Activated B cell treated with CpG ODN at 0.5 μM for 24 hours (primary cell): ENCODE measurements at regions of chr2 and their contacts with region 1.

Region 1: DNA sequence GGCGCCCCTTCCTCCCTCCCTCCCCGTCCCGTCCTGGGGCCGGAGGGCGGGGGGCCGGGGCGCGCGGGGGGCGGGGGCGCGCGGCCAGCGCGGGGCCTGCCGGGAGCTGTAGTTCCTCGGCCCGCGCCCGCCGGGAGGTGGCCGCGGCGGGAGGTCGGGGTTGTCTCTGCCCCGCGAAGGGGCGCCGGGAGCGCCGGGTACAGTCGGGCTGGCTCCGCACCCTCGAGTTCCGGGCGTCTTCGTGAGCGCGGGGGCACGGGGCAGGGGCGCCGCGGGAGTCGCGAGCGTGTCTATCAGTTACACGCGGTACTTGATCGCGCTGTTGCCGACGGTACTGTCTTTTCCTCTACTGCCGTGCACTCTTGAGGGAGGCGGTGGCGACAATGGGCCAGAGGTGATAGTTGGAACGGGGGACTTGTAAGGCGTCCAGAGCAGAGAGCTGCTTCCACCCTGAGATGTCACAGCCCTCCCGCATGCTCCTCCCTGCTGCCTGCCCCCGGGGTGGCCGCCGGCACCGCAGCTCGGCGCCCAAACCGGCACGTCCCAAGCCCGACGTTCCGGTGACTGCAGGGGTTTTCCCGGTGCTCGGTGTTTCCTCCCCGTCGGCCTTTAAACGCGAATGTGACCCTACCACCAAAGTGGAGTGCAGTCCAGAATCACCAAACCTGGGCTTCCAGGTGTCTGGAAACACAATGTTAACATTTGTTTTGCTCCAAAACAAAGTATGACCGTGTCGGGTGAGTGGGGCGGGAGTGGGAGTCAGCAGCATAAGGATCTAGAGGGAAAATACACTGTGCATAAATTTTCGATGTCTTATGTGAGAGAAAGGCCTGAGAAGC is at the start of gene PRKD3:
- DNase-seq: peak; percentile 73
- ATAC-seq: peak; percentile 83
- H3K4me3 Mint-ChIP-seq: peak within 1 kb of the TSS; percentile 97
- H3K27ac Mint-ChIP-seq: peak within 1 kb of the TSS; percentile 96
- H3K4me1 Mint-ChIP-seq: peaks cover 38% of the 10 kb centered on the region
- H3K27me3 Mint-ChIP-seq: no peaks in the 10 kb centered on the region
- CTCF ChIP-seq: no peak
- total RNA-seq, gene PRKD3: 73.0 and 82.5 TPM in 2 replicates

Region 2: GRCh38 chr2:37231241-37232130 is 93.5 kb before region 1 on chr2 and contains the starts of genes CEBPZ and NDUFAF7:
- CTCF ChIA-PET with region 1: no interaction called
- POLR2A ChIA-PET with region 1: interaction called, 12 read pairs
- intact Hi-C with region 1: loop called (anchors 1 kb)
- DNase-seq: peak; percentile 80
- ATAC-seq: peak; percentile 91
- H3K4me3 Mint-ChIP-seq: no peak within 1 kb of the TSS
- H3K27ac Mint-ChIP-seq: no peak within 1 kb of the TSS
- H3K4me1 Mint-ChIP-seq: peaks cover 16% of the 10 kb centered on the region
- H3K27me3 Mint-ChIP-seq: no peaks in the 10 kb centered on the region
- CTCF ChIP-seq: no peak
- total RNA-seq, gene CEBPZ: 55.2 and 57.0 TPM in 2 replicates
- total RNA-seq, gene NDUFAF7: 22.4 and 22.8 TPM in 2 replicates

Region 3: DNA sequence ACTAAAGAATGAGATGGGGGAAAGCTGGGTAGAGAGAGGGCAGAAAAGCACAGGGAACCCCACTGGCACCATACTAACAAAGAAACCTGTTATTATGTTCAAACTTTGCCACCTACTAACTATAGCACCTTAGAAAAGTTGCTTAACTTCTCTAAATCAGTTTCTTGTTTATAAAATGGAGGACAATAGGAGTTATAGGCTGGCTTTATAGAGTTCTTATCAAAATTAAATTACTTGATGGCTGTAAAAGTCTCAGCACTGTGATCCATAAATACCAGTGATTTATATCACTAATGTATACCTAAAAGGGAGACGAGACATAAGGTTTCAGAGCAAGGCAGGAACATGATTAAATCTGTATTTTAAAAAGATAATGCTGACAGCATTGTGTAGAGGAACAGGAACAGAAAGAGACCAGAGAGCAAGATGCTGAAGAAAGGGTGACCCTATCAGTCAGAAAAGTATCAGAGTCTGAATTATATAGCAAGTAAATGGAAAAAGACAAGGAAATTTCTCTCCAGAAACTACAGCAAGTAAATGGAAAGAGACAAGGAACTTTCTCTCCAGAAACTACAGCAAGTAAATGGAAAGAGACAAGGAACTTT is 29.4 kb before region 1 on chr2:
- CTCF ChIA-PET with region 1: no interaction called
- POLR2A ChIA-PET with region 1: interaction called, 8 read pairs
- intact Hi-C with region 1: loop called (anchors 2 kb)
- DNase-seq: no peak
- ATAC-seq: peak; percentile 34
- H3K4me3 Mint-ChIP-seq: no peak overlapping the region
- H3K27ac Mint-ChIP-seq: peak overlapping the region; percentile 39
- H3K4me1 Mint-ChIP-seq: peaks cover 48% of the 10 kb centered on the region
- H3K27me3 Mint-ChIP-seq: no peaks in the 10 kb centered on the region
- CTCF ChIP-seq: no peak

Region 4: GRCh38 chr2:37337642-37338310 is 12.8 kb after region 1 on chr2:
- CTCF ChIA-PET with region 1: interaction called, 4 read pairs
- POLR2A ChIA-PET with region 1: interaction called, 13 read pairs
- intact Hi-C with region 1: no loop called
- DNase-seq: no peak
- ATAC-seq: no peak
- H3K4me3 Mint-ChIP-seq: no peak overlapping the region
- H3K27ac Mint-ChIP-seq: no peak overlapping the region
- H3K4me1 Mint-ChIP-seq: peaks cover 11% of the 10 kb centered on the region
- H3K27me3 Mint-ChIP-seq: no peaks in the 10 kb centered on the region
- CTCF ChIP-seq: no peak

Region 5: GRCh38 chr2:37344453-37345361 is 19.7 kb after region 1 on chr2 and contains the start of gene QPCT:
- CTCF ChIA-PET with region 1: interaction called, 4 read pairs
- POLR2A ChIA-PET with region 1: interaction called, 25 read pairs
- intact Hi-C with region 1: loop called (anchors 1 kb)
- DNase-seq: peak; percentile 53
- ATAC-seq: peak; percentile 75
- H3K4me3 Mint-ChIP-seq: peak within 1 kb of the TSS; percentile 85
- H3K27ac Mint-ChIP-seq: peak within 1 kb of the TSS; percentile 30
- H3K4me1 Mint-ChIP-seq: peaks cover 21% of the 10 kb centered on the region
- H3K27me3 Mint-ChIP-seq: no peaks in the 10 kb centered on the region
- CTCF ChIP-seq: no peak
- total RNA-seq, gene QPCT: 1.9 and 2.1 TPM in 2 replicates

Region 6: GRCh38 chr2:37350034-37350433 is 25.0 kb after region 1 on chr2:
- CTCF ChIA-PET with region 1: no interaction called
- POLR2A ChIA-PET with region 1: interaction called, 25 read pairs
- intact Hi-C with region 1: loop called (anchors 1 kb)
- DNase-seq: peak; percentile 54
- ATAC-seq: peak; percentile 88
- H3K4me3 Mint-ChIP-seq: peak overlapping the region; percentile 46
- H3K27ac Mint-ChIP-seq: peak overlapping the region; percentile 66
- H3K4me1 Mint-ChIP-seq: peaks cover 29% of the 10 kb centered on the region
- H3K27me3 Mint-ChIP-seq: peaks cover 1% of the 10 kb centered on the region
- CTCF ChIP-seq: no peak

Region 7: DNA sequence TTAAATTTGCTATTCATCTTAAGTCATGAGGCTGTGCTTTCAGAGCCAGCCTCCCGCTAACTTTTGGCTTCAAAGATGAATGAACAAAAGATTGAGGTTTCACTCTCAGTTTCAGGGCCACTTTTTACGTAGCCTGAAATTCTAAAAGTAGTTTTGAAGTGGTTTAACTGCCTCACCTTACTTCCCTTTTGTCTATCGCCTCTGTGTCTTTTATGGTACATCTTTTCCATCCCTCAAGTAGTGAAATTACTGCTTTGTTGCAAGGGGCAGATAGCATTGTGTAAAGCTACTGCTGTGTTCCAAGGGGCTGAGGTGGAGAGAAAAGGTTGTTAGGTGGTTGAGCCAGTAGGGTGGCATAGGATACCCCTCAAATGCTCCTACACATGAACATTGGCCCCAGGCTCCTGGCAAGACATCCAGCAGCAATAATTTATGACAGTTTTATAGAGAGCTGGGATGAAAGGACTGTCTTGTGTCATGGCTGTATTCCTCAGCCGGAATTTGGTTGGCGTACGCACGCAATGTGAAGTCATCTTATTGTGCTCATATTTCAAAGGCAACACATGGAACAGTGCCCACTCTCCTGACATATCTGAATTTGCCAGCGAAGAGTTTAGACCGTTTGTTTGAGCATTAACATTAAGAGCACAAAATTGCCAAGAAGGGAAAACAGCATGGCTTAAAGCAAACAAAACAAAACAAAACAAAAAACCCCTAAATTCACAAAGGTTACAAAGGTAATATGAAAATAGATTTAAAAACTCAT is 51.6 kb after region 1 on chr2:
- CTCF ChIA-PET with region 1: interaction called, 3 read pairs
- POLR2A ChIA-PET with region 1: interaction called, 18 read pairs
- intact Hi-C with region 1: loop called (anchors 1 kb)
- DNase-seq: no peak
- ATAC-seq: peak; percentile 71
- H3K4me3 Mint-ChIP-seq: peak overlapping the region; percentile 80
- H3K27ac Mint-ChIP-seq: peak overlapping the region; percentile 83
- H3K4me1 Mint-ChIP-seq: peaks cover 46% of the 10 kb centered on the region
- H3K27me3 Mint-ChIP-seq: no peaks in the 10 kb centered on the region
- CTCF ChIP-seq: no peak

Region 8: GRCh38 chr2:37414470-37414949 is 89.5 kb after region 1 on chr2:
- CTCF ChIA-PET with region 1: no interaction called
- POLR2A ChIA-PET with region 1: no interaction called
- intact Hi-C with region 1: no loop called
- DNase-seq: no peak
- ATAC-seq: peak; percentile 61
- H3K4me3 Mint-ChIP-seq: no peak overlapping the region
- H3K27ac Mint-ChIP-seq: no peak overlapping the region
- H3K4me1 Mint-ChIP-seq: peaks cover 6% of the 10 kb centered on the region
- H3K27me3 Mint-ChIP-seq: no peaks in the 10 kb centered on the region
- CTCF ChIP-seq: peak; percentile 60